Prostate gland (tissue), 2 donors: ENCODE measurements at regions of chrX and their contacts with region 1.

Region 1: GRCh38 chrX:111869639-111870034 is 6.3 kb upstream of the TRPC5OS start:
- DNase-seq: peak; percentile 17
- H3K4me3 ChIP-seq: no peak overlapping the region
- H3K27ac ChIP-seq: no peak overlapping the region
- H3K4me1 ChIP-seq: no peaks in the 10 kb centered on the region
- H3K27me3 ChIP-seq: no peaks in the 10 kb centered on the region
- CTCF ChIP-seq: peak; percentile 19 to 61 (median 52)
- POLR2A ChIP-seq: no peak

Region 2: DNA sequence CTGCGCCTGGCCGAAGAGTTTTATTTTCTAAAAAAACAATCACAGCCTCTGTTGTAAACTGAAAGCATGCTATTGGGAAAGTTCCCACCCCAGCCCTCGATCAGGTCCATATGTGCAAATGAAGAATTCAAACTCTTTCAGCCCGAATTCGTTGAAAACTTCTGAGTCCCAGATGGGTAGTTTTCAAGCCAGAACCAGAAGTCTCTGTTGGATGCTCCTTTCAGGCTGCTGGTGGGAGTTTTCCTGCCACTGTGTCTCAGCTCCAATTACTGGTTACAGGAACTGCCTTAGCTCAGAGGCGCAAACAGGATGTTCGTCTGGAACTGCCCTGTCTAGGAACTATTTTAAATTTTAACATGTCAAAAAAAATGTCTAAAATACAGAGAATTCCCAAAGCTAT is 198.0 kb before region 1 on chrX:
- intact Hi-C with region 1: no loop called
- DNase-seq: no peak
- H3K4me3 ChIP-seq: no peak overlapping the region
- H3K27ac ChIP-seq: no peak overlapping the region
- H3K4me1 ChIP-seq: no peaks in the 10 kb centered on the region
- H3K27me3 ChIP-seq: no peaks in the 10 kb centered on the region
- CTCF ChIP-seq: no peak
- POLR2A ChIP-seq: no peak

Region 3: DNA sequence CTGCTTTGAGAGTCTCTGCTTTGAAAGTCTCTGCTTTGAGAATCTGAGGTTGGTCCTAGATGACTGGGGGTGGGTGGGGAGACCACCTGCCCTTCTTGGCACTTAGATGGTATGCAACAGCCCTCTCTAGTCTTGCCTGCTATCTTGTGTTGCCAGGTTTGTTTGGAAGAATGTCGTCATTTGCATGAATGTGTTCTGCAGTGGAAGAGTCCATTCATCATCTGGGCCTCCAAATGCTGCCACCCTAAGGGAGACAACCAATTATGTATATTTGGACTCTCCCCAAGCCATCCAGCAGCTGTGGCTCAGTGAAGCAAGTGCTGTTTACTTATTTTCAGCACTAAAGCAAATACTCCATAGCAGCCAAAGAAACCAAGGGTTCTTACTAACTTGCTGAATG is 38.3 kb before region 1 on chrX:
- intact Hi-C with region 1: no loop called
- DNase-seq: no peak
- H3K4me3 ChIP-seq: no peak overlapping the region
- H3K27ac ChIP-seq: no peak overlapping the region
- H3K4me1 ChIP-seq: no peaks in the 10 kb centered on the region
- H3K27me3 ChIP-seq: no peaks in the 10 kb centered on the region
- CTCF ChIP-seq: no peak
- POLR2A ChIP-seq: no peak

Region 4: DNA sequence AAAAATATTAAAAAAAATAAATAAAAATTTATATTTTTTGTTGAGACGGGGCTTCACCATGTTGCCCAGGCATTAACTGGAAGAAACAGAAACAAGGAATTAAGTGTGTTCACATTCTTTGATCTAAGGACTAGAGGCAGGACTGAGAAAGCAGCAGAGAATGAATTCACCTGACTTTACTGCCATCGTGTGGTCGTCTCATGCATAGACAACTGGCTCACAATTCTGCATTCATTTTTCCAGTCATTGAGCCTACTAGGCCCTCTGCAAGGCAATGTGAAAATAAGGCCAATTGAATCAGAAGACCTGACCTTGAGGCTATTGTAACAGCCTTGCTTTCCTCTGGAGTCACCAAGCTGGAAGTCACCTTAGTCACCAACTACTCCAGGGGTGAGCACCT is 772.7 kb after region 1 on chrX:
- intact Hi-C with region 1: loop called (anchors 5 kb)
- DNase-seq: peak; percentile 5
- H3K4me3 ChIP-seq: no peak overlapping the region
- H3K27ac ChIP-seq: no peak overlapping the region
- H3K4me1 ChIP-seq: no peaks in the 10 kb centered on the region
- H3K27me3 ChIP-seq: no peaks in the 10 kb centered on the region
- CTCF ChIP-seq: peak in 3 of 4 experiments; percentile 50 to 69 (median 58)
- POLR2A ChIP-seq: no peak